Activated T-helper 1 cell treated with anti-CD3 and anti-CD28 coated beads, Interleukin-12 subunit alpha, Interleukin-12 subunit beta, Interleukin-2, Interleukin-4 antibody, amounts not matched to agents 30 ng/mL and 10 ng/mL and 1 ng/mL, durations not matched to agents 14 hours and 24 hours and 36 hours (primary cell): ENCODE measurements at regions of chr1 and their contacts with region 1.

Region 1: DNA sequence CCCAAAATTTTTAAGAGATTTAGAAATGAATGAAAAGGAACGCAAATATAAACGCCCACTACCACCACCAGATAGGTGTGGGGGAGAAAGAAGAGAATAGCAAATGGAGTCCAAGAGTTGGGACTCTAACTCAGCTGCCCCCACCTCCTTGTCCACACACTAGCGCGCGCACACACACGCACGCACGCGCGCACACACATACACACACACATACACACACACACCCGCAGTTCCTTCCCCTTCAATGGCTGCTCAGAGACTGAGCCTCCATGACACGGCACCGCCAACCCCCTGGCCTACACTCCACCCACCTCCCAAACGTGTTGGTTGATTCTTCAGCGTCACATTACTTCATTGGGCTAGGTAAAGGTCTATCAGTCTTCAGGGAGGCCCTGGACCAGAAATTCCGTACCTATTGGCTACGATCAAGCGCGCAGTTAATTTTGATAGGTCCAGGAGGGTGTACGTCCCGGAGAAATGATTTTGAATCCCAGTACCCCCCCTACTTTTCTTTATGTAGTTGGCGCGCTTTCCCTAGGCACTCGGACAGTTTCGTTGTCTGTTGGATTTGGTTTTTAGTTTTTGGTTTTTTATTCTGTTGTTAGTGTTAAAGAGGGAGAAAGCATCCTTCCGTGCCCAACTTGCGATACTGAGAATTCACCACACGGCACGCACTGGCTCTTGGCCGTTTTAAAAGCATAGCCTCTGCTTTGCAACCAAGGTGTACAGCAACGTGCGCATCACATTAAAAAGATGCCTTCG is at the start of gene ANP32E:
- DNase-seq: peak; percentile 93
- H3K4me3 Mint-ChIP-seq: no peak within 1 kb of the TSS
- H3K27ac Mint-ChIP-seq: peak within 1 kb of the TSS; percentile 99
- H3K4me1 Mint-ChIP-seq: peaks cover 19% of the 10 kb centered on the region
- H3K27me3 Mint-ChIP-seq: peaks cover 3% of the 10 kb centered on the region
- total RNA-seq, gene ANP32E: 196 and 217 TPM in 2 replicates

Region 2: DNA sequence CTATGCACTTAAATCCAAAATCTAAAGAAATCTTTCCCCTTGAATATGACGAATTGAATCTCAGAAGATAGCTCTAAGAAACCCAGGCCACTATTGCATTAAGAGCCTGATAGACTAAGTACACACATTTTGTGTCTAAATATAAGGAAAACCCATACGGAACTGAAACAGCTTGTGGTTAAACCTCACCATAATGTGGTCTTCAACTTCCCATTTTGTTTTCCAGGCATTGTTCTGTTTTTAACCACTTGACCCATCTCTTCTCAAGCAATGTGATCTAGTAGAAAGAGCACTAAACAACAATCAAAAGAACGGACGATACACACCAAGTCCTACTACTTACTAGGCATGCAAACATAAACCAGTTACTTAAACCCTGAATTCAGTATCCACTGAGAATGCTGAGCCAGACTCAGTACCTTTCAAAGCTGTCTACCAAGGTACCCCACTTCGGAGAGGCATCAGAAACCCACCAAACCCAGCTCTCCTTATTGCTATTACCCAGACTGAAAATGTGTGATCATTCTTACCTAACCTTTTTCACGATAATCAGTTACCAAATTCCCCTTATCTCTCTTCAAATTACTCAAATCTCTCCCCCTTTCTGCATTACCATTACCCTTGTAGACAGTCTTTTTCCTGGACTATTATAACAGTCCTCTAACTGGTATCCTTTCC is 238.3 kb before region 1 on chr1:
- intact Hi-C with region 1: no loop called
- DNase-seq: no peak
- H3K4me3 Mint-ChIP-seq: peak overlapping the region; percentile 6
- H3K27ac Mint-ChIP-seq: peak overlapping the region; percentile 65
- H3K4me1 Mint-ChIP-seq: peaks cover 52% of the 10 kb centered on the region
- H3K27me3 Mint-ChIP-seq: peaks cover 2% of the 10 kb centered on the region

Region 3: DNA sequence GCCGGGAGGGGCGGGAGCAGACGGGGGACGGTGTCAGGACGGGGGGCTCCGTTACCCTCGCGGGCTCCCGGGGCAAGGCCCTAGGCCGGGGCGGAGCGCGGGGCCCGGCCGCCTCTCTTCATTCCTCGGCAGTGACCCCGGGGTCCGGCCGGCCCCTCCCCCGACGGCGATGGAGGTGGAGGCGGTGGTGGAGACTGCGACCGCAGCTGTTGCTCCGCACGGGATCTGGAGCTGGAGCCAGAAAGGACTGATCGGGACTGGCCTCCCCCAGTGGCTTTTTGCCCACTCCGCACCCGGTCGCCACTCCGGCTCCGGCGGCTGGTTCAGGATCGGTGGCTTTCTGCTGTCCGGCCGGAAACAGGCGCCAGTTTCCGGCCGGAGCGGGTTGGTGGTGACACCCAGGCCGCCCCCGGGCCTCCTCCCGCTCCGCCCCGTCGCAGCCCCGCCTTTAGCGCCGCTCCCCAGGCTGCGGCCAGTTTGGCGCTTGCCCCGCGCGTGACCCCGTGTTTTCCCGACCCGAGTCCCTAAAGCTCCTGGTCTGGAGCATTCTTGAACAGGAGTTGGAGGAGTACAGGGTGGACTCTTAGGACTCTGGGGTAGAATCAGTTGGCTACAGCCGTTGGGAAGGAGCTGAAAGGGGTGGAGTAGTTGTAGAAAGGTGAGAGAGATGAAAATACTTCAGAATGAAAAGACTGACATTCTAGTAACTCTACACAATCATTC is 225.5 kb before region 1 on chr1 and contains the start of gene OTUD7B:
- intact Hi-C with region 1: loop called (anchors 1 kb)
- DNase-seq: peak; percentile 72
- H3K4me3 Mint-ChIP-seq: peak within 1 kb of the TSS; percentile 99
- H3K27ac Mint-ChIP-seq: peak within 1 kb of the TSS; percentile 98
- H3K4me1 Mint-ChIP-seq: peaks cover 35% of the 10 kb centered on the region
- H3K27me3 Mint-ChIP-seq: peaks cover 4% of the 10 kb centered on the region
- total RNA-seq, gene OTUD7B: 41.1 and 41.8 TPM in 2 replicates

Region 4: GRCh38 chr1:150259758-150260669 is 24.0 kb after region 1 on chr1:
- intact Hi-C with region 1: loop called (anchors 1 kb)
- DNase-seq: no peak
- H3K4me3 Mint-ChIP-seq: no peak overlapping the region
- H3K27ac Mint-ChIP-seq: no peak overlapping the region
- H3K4me1 Mint-ChIP-seq: peaks cover 19% of the 10 kb centered on the region
- H3K27me3 Mint-ChIP-seq: peaks cover 37% of the 10 kb centered on the region

Region 5: GRCh38 chr1:150293433-150294168 is 57.6 kb after region 1 on chr1 and contains the start of gene MRPS21:
- intact Hi-C with region 1: loop called (anchors 1 kb)
- DNase-seq: peak; percentile 85
- H3K4me3 Mint-ChIP-seq: peak within 1 kb of the TSS; percentile 93
- H3K27ac Mint-ChIP-seq: peak within 1 kb of the TSS; percentile 98
- H3K4me1 Mint-ChIP-seq: peaks cover 24% of the 10 kb centered on the region
- H3K27me3 Mint-ChIP-seq: no peaks in the 10 kb centered on the region
- total RNA-seq, gene MRPS21: 81.4 and 85.2 TPM in 2 replicates

Region 6: GRCh38 chr1:150486964-150487762 is 251.1 kb after region 1 on chr1 and contains the start of gene TARS2:
- intact Hi-C with region 1: loop called (anchors 1 kb)
- DNase-seq: peak; percentile 94
- H3K4me3 Mint-ChIP-seq: peak within 1 kb of the TSS; percentile 98
- H3K27ac Mint-ChIP-seq: peak within 1 kb of the TSS; percentile 95
- H3K4me1 Mint-ChIP-seq: peaks cover 35% of the 10 kb centered on the region
- H3K27me3 Mint-ChIP-seq: no peaks in the 10 kb centered on the region
- total RNA-seq, gene TARS2: 77.3 and 77.4 TPM in 2 replicates